ENCODE measurements at regions of chr17 and their contacts with region 1.

Region 1: GRCh38 chr17:48047741-48048383 is at the start of gene NFE2L1:
- DNase-seq: peak; percentile 99
- ATAC-seq: peak; percentile 93
- H3K4me3 ChIP-seq: peak within 1 kb of the TSS; percentile 97
- H3K27ac ChIP-seq: peak within 1 kb of the TSS; percentile 93
- H3K4me1 ChIP-seq: peaks cover 12% of the 10 kb centered on the region; the same call in 1 of the 2 replicates
- H3K27me3 ChIP-seq: no peaks in the 10 kb centered on the region
- CTCF ChIP-seq: no peak
- EP300 ChIP-seq: peak in 1 of 2 experiments; percentile 37; a peak in 1 of 4 replicates
- POLR2A ChIP-seq: peak; percentile 96
- RAD21 ChIP-seq: no peak
- polyA plus RNA-seq, gene NFE2L1: 3.8 to 4.1 TPM

Region 2: DNA sequence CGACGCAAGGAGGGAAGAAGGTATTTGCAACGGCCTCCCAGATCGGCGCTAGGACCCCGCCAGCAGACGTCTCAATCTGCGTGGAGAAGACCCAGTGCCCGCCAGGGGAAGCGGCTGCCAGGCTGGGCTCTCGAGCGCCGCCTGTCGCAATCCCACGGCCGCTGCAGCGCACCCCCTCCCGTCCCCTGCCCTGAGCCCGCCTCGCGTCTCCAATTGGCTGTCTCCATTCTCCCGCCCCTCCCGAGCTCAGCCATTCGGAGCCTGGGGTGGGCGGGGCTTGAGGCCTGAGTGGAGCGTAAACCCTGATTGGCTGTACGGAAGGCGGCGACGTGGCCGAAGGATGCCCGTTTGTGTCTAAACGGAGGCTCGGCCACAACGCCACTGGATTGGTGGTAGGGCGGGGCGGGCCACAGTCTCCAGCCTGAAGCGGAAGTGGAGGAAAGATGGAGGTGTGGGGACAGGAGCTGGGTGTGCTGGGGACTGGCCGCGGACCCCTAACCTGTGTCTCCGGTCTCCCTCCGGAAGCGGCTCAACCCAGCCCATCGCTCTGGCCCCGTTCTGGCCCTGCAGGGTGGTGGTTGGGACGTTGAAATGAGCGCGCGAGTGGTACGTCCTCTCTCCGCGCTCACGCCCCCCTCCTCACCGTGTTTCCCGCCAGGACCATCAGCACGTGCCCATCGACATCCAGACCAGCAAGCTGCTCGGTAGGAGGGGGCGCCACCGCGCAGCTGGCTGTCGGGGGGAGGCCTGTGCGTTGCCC is 77.0 kb before region 1 on chr17 and contains the start of gene CDK5RAP3:
- CTCF ChIA-PET with region 1: interaction called, 9 read pairs
- POLR2A ChIA-PET with region 1: interaction called, 4 read pairs
- RAD21 ChIA-PET with region 1: interaction called, 10 read pairs
- SMC1A ChIA-PET with region 1: interaction called, 4 read pairs
- in situ Hi-C with region 1: no loop called
- intact Hi-C with region 1: loop called (anchors 2 kb)
- DNase-seq: peak; percentile 97
- ATAC-seq: peak; percentile 98
- H3K4me3 ChIP-seq: peak within 1 kb of the TSS; percentile 92
- H3K27ac ChIP-seq: peak within 1 kb of the TSS; percentile 83
- H3K4me1 ChIP-seq: peaks cover 15% of the 10 kb centered on the region
- H3K27me3 ChIP-seq: no peaks in the 10 kb centered on the region
- CTCF ChIP-seq: peak; percentile 97 to 100 (median 99); a peak in 5 of 6 replicates
- EP300 ChIP-seq: no peak
- POLR2A ChIP-seq: peak; percentile 97
- RAD21 ChIP-seq: peak; percentile 45
- polyA plus RNA-seq, gene CDK5RAP3: 69.4 to 160 TPM

Region 3: GRCh38 chr17:48030531-48030930 is 17.3 kb before region 1 on chr17:
- CTCF ChIA-PET with region 1: interaction called, 87 read pairs
- POLR2A ChIA-PET with region 1: interaction called, 29 read pairs
- RAD21 ChIA-PET with region 1: interaction called, 47 read pairs
- SMC1A ChIA-PET with region 1: interaction called, 39 read pairs
- in situ Hi-C with region 1: no loop called
- intact Hi-C with region 1: loop called (anchors 2 kb)
- DNase-seq: no peak
- ATAC-seq: no peak
- H3K4me3 ChIP-seq: no peak overlapping the region
- H3K27ac ChIP-seq: no peak overlapping the region
- H3K4me1 ChIP-seq: peaks cover 14% of the 10 kb centered on the region
- H3K27me3 ChIP-seq: peaks cover 0 to 2% of the 10 kb centered on the region in 2 experiments; a peak in 2 of 4 replicates
- CTCF ChIP-seq: no peak
- EP300 ChIP-seq: no peak
- POLR2A ChIP-seq: no peak
- RAD21 ChIP-seq: no peak

Region 4: DNA sequence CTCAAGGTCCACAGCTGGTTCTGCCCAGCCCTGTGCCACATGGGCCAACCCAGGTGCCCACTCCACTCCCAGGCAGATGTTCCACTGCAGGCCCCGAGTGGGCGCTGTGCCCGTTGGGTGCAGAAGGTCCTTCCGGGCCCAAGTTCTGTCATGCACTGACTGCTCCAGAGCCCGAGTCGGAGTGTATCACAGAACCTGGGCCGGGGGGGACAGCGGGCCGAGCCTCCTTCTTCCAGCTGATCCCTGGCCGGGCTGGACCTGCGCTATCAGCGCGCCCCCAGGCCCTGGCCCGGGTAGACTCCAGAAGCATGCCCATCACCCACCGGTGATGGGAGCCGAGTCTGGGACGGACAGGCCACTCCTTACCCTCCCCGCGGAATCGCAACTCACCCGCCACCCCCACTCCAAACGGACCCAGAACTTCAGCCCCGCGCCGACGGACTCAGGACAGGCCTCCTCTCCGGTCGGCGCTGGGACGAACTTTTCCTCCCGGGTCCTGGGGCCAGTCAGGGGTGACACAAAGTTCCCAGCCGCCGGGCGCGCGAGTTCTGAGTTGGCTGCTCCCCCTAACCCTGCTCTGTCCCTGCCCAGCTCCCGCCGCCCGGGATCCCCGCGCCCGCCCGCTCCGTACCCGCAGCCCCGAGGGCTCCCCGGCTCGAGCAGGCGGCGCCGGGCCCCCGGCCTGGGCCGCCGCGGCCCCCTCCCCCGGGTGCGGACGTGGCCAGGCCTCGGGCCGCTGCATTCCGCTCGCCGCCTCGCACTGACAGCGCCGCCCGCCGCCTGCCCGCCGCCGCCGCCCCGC is 10.6 kb before region 1 on chr17 and contains the start of gene COPZ2:
- CTCF ChIA-PET with region 1: interaction called, 77 read pairs
- POLR2A ChIA-PET with region 1: interaction called, 22 read pairs
- RAD21 ChIA-PET with region 1: interaction called, 13 read pairs
- SMC1A ChIA-PET with region 1: interaction called, 20 read pairs
- in situ Hi-C with region 1: no loop called
- intact Hi-C with region 1: no loop called
- DNase-seq: no peak
- ATAC-seq: peak; percentile 93
- H3K4me3 ChIP-seq: peak within 1 kb of the TSS; percentile 73
- H3K27ac ChIP-seq: no peak within 1 kb of the TSS
- H3K4me1 ChIP-seq: peaks cover 9% of the 10 kb centered on the region
- H3K27me3 ChIP-seq: peaks cover 3 to 4% of the 10 kb centered on the region in 2 experiments; a peak in 3 of 4 replicates
- CTCF ChIP-seq: peak; percentile 67 to 91 (median 73)
- EP300 ChIP-seq: no peak
- POLR2A ChIP-seq: no peak
- RAD21 ChIP-seq: peak; percentile 20; the same call in 1 of the 2 replicates
- polyA plus RNA-seq, gene COPZ2: 2.5 to 2.9 TPM

Region 5: GRCh38 chr17:48060249-48060648 is 12.4 kb after region 1 on chr17:
- CTCF ChIA-PET with region 1: interaction called, 6 read pairs
- POLR2A ChIA-PET with region 1: interaction called, 18 read pairs
- RAD21 ChIA-PET with region 1: interaction called, 7 read pairs
- SMC1A ChIA-PET with region 1: interaction called, 7 read pairs
- in situ Hi-C with region 1: no loop called
- intact Hi-C with region 1: no loop called
- DNase-seq: no peak
- ATAC-seq: no peak
- H3K4me3 ChIP-seq: no peak overlapping the region
- H3K27ac ChIP-seq: no peak overlapping the region
- H3K4me1 ChIP-seq: peaks cover 14% of the 10 kb centered on the region
- H3K27me3 ChIP-seq: no peaks in the 10 kb centered on the region
- CTCF ChIP-seq: no peak
- EP300 ChIP-seq: no peak
- POLR2A ChIP-seq: no peak; the same call in 1 of the 2 replicates
- RAD21 ChIP-seq: no peak

Region 6: GRCh38 chr17:48107168-48108132 is 59.6 kb after region 1 on chr17 and contains the start of gene SNX11:
- CTCF ChIA-PET with region 1: interaction called, 8 read pairs
- POLR2A ChIA-PET with region 1: interaction called, 25 read pairs
- RAD21 ChIA-PET with region 1: interaction called, 18 read pairs
- SMC1A ChIA-PET with region 1: interaction called, 5 read pairs
- in situ Hi-C with region 1: no loop called
- intact Hi-C with region 1: no loop called
- DNase-seq: no peak
- ATAC-seq: peak; percentile 88
- H3K4me3 ChIP-seq: peak within 1 kb of the TSS; percentile 97
- H3K27ac ChIP-seq: peak within 1 kb of the TSS; percentile 80
- H3K4me1 ChIP-seq: peaks cover 6% of the 10 kb centered on the region
- H3K27me3 ChIP-seq: no peaks in the 10 kb centered on the region
- CTCF ChIP-seq: peak in 2 of 3 experiments; percentile 7 to 20; a peak in 1 of 6 replicates
- EP300 ChIP-seq: no peak
- POLR2A ChIP-seq: peak; percentile 91
- RAD21 ChIP-seq: no peak
- polyA plus RNA-seq, gene SNX11: 61.3 to 75.6 TPM

Region 7: GRCh38 chr17:48113201-48113676 is 65.4 kb after region 1 on chr17:
- CTCF ChIA-PET with region 1: interaction called, 8 read pairs
- POLR2A ChIA-PET with region 1: interaction called, 25 read pairs
- RAD21 ChIA-PET with region 1: interaction called, 18 read pairs
- SMC1A ChIA-PET with region 1: interaction called, 5 read pairs
- in situ Hi-C with region 1: no loop called
- intact Hi-C with region 1: no loop called
- DNase-seq: peak; percentile 71
- ATAC-seq: peak; percentile 55
- H3K4me3 ChIP-seq: peak overlapping the region; percentile 97
- H3K27ac ChIP-seq: peak overlapping the region; percentile 93
- H3K4me1 ChIP-seq: no peaks in the 10 kb centered on the region; the same call in none of the 2 replicates
- H3K27me3 ChIP-seq: no peaks in the 10 kb centered on the region
- CTCF ChIP-seq: no peak
- EP300 ChIP-seq: no peak
- POLR2A ChIP-seq: peak; percentile 55; the same call in 1 of the 2 replicates
- RAD21 ChIP-seq: no peak

Region 8: GRCh38 chr17:48153691-48154358 is 106.0 kb after region 1 on chr17:
- CTCF ChIA-PET with region 1: no interaction called
- POLR2A ChIA-PET with region 1: no interaction called
- RAD21 ChIA-PET with region 1: no interaction called
- SMC1A ChIA-PET with region 1: no interaction called
- in situ Hi-C with region 1: no loop called
- intact Hi-C with region 1: no loop called
- DNase-seq: no peak
- ATAC-seq: peak; percentile 48; the same call in 2 of the 3 replicates
- H3K4me3 ChIP-seq: no peak overlapping the region
- H3K27ac ChIP-seq: no peak overlapping the region
- H3K4me1 ChIP-seq: no peaks in the 10 kb centered on the region
- H3K27me3 ChIP-seq: no peaks in the 10 kb centered on the region
- CTCF ChIP-seq: peak; percentile 25 to 34 (median 26); a peak in 4 of 6 replicates
- EP300 ChIP-seq: no peak
- POLR2A ChIP-seq: no peak
- RAD21 ChIP-seq: peak; percentile 64

Measured in GM12878 (cell line).